GM12878 (cell line): ENCODE measurements at regions of chr1 and their contacts with region 1.

Region 1: DNA sequence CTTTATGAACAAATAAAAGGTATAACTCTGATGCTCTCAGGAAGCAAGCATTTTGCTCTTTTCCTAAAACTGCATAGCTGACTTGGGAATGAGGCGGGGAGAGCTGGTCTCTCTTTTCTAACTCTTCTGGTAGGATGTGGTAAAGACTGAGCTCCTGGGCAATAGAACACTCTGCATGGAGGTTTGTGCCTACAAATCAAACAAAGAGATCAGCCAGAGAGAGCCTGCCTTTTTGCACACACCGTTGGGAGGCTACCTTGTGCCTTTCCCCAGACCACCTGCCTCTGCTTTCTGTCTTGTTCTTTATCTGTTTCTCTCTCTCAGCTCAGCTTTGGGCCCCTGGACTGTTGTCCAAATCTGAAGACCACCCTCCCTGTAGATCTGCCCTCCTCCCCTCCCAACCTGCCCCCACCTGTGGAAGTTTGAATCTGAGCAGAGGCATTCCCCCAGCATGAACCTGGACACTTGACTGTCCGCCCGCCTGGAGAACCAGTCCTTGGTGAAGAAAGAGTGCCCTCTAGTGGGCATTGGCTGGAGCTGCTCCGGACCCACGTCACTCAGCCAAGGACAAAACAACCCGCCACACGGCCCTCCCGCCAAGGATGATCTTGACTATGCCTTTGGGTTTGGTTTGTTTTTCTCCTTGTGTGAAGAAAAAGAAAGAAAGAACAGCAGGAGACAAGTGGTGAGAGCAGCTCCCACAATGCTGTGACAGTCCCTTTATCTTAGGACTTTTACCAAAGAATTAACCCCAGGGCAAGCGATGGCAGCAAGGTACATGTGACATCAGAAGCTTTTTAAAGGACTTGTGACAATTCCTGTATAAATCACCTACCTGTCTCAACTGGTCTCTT is 228.2 kb downstream of the PBX1 start:
- DNase-seq: no peak
- ATAC-seq: peak; percentile 99
- H3K4me3 ChIP-seq: no peak overlapping the region
- H3K27ac ChIP-seq: no peak overlapping the region
- H3K4me1 ChIP-seq: no peaks in the 10 kb centered on the region
- H3K27me3 ChIP-seq: no peaks in the 10 kb centered on the region
- CTCF ChIP-seq: peak; percentile 86 to 94 (median 93)
- EP300 ChIP-seq: no peak
- POLR2A ChIP-seq: no peak
- RAD21 ChIP-seq: peak; percentile 89

Region 2: GRCh38 chr1:163361123-163361934 is 1425.9 kb before region 1 on chr1:
- CTCF ChIA-PET with region 1: interaction called, 7 read pairs
- POLR2A ChIA-PET with region 1: no interaction called
- RAD21 ChIA-PET with region 1: no interaction called
- SMC1A ChIA-PET with region 1: interaction called, 5 read pairs
- in situ Hi-C with region 1: no loop called
- intact Hi-C with region 1: loop called (anchors 2 kb)
- DNase-seq: no peak
- ATAC-seq: peak; percentile 78
- H3K4me3 ChIP-seq: no peak overlapping the region
- H3K27ac ChIP-seq: no peak overlapping the region
- H3K4me1 ChIP-seq: no peaks in the 10 kb centered on the region
- H3K27me3 ChIP-seq: no peaks in the 10 kb centered on the region
- CTCF ChIP-seq: peak; percentile 39 to 59 (median 53); a peak in 5 of 6 replicates
- EP300 ChIP-seq: no peak
- POLR2A ChIP-seq: no peak
- RAD21 ChIP-seq: peak; percentile 63

Region 3: DNA sequence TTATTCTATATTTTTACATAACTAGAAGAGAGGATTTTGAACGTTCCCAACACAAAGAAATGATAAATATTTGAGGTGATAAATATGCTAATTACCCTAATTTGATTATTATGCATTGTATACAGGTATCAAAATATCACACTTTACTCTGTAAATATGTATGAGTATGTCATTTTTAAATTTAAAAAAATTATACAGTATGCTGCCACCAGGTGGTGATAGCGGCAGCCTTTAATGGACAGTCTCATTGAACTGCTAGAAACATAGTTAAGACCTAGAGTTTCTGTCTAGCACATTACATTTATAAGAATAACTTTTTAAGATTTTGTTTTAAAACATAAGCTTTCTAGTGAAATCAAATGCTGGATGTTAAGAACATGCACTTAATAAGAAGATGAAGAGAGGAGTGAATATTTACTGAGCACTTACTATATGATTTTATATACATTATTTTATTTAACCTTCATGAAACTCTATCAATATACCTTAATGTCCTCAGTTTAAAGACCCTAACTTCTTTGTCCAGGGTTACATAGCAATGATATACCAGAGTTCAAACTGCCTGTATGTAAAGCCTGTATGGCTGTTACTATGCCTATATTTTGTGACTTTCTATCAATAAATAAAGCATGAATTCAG is 1258.4 kb before region 1 on chr1:
- CTCF ChIA-PET with region 1: interaction called, 4 read pairs
- POLR2A ChIA-PET with region 1: no interaction called
- RAD21 ChIA-PET with region 1: no interaction called
- SMC1A ChIA-PET with region 1: no interaction called
- in situ Hi-C with region 1: loop called (anchors 10 kb)
- intact Hi-C with region 1: loop called (anchors 2 kb)
- DNase-seq: no peak
- ATAC-seq: peak; percentile 77
- H3K4me3 ChIP-seq: no peak overlapping the region
- H3K27ac ChIP-seq: no peak overlapping the region
- H3K4me1 ChIP-seq: no peaks in the 10 kb centered on the region
- H3K27me3 ChIP-seq: no peaks in the 10 kb centered on the region
- CTCF ChIP-seq: peak; percentile 44 to 52 (median 48)
- EP300 ChIP-seq: no peak
- POLR2A ChIP-seq: no peak
- RAD21 ChIP-seq: peak; percentile 63

Region 4: DNA sequence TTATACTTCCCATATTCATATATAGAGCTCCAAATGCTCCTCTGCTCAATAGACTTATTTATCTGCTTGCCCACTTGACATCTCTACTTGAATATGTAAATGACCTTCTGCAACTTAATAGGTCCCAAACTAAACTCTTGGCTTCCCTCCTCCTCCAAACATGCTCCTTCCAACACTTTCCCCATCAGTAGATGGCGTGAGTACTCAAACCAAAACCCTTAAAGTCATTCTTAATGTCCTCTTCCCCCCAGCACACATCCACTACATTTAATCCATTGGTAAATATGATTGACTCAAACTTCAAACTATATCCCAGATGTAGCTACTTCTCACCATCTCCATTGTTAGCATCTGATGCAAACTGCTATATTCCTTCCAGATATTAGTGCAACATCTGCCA is 276.8 kb before region 1 on chr1:
- CTCF ChIA-PET with region 1: no interaction called
- POLR2A ChIA-PET with region 1: no interaction called
- RAD21 ChIA-PET with region 1: no interaction called
- SMC1A ChIA-PET with region 1: no interaction called
- in situ Hi-C with region 1: no loop called
- intact Hi-C with region 1: loop called (anchors 5 kb)
- DNase-seq: no peak
- ATAC-seq: no peak
- H3K4me3 ChIP-seq: no peak overlapping the region
- H3K27ac ChIP-seq: no peak overlapping the region
- H3K4me1 ChIP-seq: no peaks in the 10 kb centered on the region
- H3K27me3 ChIP-seq: no peaks in the 10 kb centered on the region
- CTCF ChIP-seq: no peak
- EP300 ChIP-seq: no peak
- POLR2A ChIP-seq: no peak
- RAD21 ChIP-seq: no peak

Region 5: GRCh38 chr1:164667001-164667400 is 120.2 kb before region 1 on chr1:
- CTCF ChIA-PET with region 1: no interaction called
- POLR2A ChIA-PET with region 1: no interaction called
- RAD21 ChIA-PET with region 1: no interaction called
- SMC1A ChIA-PET with region 1: no interaction called
- in situ Hi-C with region 1: no loop called
- intact Hi-C with region 1: loop called (anchors 5 kb)
- DNase-seq: no peak
- ATAC-seq: no peak
- H3K4me3 ChIP-seq: no peak overlapping the region
- H3K27ac ChIP-seq: no peak overlapping the region
- H3K4me1 ChIP-seq: no peaks in the 10 kb centered on the region
- H3K27me3 ChIP-seq: no peaks in the 10 kb centered on the region
- CTCF ChIP-seq: no peak
- EP300 ChIP-seq: no peak
- POLR2A ChIP-seq: no peak
- RAD21 ChIP-seq: no peak

Region 6: DNA sequence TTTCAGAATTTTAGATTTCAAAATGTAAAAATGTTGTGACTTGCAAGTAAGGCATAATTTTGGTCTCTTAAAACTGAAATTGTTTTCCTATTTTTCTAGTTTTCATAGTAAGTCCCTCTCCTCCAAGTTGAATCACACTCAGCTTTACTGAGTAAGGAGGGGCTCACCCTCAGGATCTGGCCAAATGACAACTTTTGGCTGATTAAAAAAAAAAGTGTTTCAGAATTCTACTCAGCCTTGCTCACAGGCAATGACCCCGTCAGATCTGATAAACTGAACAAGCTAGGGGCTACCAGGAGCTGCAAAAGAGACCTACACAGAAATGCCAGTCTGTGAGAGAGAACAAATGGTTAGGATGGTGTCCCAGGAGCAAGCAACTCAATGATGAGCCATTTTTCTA is 68.4 kb before region 1 on chr1:
- CTCF ChIA-PET with region 1: no interaction called
- POLR2A ChIA-PET with region 1: no interaction called
- RAD21 ChIA-PET with region 1: no interaction called
- SMC1A ChIA-PET with region 1: no interaction called
- in situ Hi-C with region 1: no loop called
- intact Hi-C with region 1: no loop called
- DNase-seq: no peak
- ATAC-seq: no peak
- H3K4me3 ChIP-seq: no peak overlapping the region
- H3K27ac ChIP-seq: no peak overlapping the region
- H3K4me1 ChIP-seq: no peaks in the 10 kb centered on the region
- H3K27me3 ChIP-seq: no peaks in the 10 kb centered on the region
- CTCF ChIP-seq: no peak
- EP300 ChIP-seq: no peak
- POLR2A ChIP-seq: no peak
- RAD21 ChIP-seq: no peak